CD8-positive, alpha-beta T cell (primary cell): ENCODE measurements at regions of chr5 and their contacts with region 1.

Region 1: DNA sequence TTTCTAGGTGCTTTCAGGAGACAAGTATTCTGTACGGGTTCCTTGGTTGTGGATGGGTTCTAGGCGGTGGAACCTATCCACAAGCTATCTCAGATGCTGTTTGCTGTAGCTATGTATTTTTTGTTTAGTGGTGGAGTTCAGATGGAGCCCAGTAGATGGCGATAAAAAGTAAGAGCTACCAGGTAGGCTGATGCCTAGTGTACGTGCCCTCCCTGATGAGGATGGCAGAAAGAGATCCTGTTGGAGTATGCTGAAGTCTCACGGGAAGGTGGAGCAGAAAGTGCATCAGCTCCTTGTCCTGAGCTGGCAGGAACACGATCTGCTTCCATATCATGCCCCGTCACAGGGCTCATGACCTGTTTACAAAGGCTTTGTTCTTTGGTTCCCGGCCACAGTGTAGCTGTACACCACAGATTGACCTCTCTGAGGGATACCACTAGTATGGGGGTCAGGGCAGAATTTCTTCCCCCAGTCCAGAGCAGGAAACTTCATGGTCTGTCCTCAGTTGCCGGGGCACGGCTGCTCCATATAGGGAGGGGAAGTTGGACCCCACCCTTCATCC is 12.6 kb upstream of the UGT3A2 start:
- DNase-seq: peak in 2 of 9 experiments; percentile 43 to 54
- ATAC-seq: peak; percentile 57
- H3K4me3 ChIP-seq: no peak overlapping the region
- H3K4me3 Mint-ChIP-seq: no peak overlapping the region
- H3K27ac ChIP-seq: no peak overlapping the region
- H3K27ac Mint-ChIP-seq: no peak overlapping the region
- H3K4me1 ChIP-seq: no peaks in the 10 kb centered on the region
- H3K4me1 Mint-ChIP-seq: no peaks in the 10 kb centered on the region
- H3K27me3 ChIP-seq: no peaks in the 10 kb centered on the region
- H3K27me3 Mint-ChIP-seq: peaks cover 30% of the 10 kb centered on the region
- CTCF ChIP-seq: peak; percentile 71

Region 2: DNA sequence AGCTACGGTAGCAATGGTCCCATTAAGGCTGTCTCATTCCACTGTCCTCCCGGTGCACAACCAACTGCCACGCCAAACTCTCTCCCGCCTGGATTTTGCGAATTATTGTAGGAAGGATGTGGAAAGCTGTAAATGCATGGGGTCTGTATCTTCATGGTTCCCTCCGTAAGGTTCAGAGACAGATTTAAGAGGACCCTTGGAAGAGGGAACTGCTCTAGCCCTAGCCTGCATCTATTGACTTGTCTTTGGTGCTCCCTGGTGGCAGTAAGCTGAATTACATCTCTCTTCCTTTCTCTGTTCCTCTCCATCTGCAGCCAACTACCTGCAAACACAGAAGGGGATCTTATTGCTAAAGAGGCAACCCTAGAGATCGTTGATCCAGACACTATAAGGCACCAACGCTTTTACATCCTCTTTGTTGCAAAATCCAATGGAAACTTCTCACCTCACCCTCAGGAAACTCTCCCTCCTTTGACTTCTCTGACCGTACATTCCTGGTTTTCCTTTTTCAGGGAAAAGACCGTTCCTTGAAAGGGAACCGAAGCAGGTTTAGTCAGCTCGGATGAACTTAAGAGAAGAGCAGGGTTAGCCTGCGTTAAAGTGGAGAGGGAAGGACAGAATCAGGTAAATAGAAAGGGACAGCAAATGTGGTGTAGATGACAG is 152.8 kb before region 1 on chr5:
- CTCF ChIA-PET with region 1: no interaction called
- POLR2A ChIA-PET with region 1: no interaction called
- intact Hi-C with region 1: no loop called
- DNase-seq: peak; percentile 35 to 79 (median 66)
- ATAC-seq: peak; percentile 56
- H3K4me3 ChIP-seq: no peak overlapping the region
- H3K4me3 Mint-ChIP-seq: peak overlapping the region; percentile 33
- H3K27ac ChIP-seq: no peak overlapping the region
- H3K27ac Mint-ChIP-seq: no peak overlapping the region
- H3K4me1 ChIP-seq: peaks cover 14% of the 10 kb centered on the region
- H3K4me1 Mint-ChIP-seq: peaks cover 36% of the 10 kb centered on the region
- H3K27me3 ChIP-seq: no peaks in the 10 kb centered on the region
- H3K27me3 Mint-ChIP-seq: peaks cover 4% of the 10 kb centered on the region
- CTCF ChIP-seq: peak; percentile 84

Region 3: GRCh38 chr5:36089989-36090564 is 10.8 kb after region 1 on chr5:
- CTCF ChIA-PET with region 1: interaction called, 13 read pairs
- POLR2A ChIA-PET with region 1: no interaction called
- intact Hi-C with region 1: no loop called
- DNase-seq: peak in 1 of 9 experiments; percentile 12
- ATAC-seq: no peak
- H3K4me3 ChIP-seq: no peak overlapping the region
- H3K4me3 Mint-ChIP-seq: no peak overlapping the region
- H3K27ac ChIP-seq: no peak overlapping the region
- H3K27ac Mint-ChIP-seq: no peak overlapping the region
- H3K4me1 ChIP-seq: no peaks in the 10 kb centered on the region
- H3K4me1 Mint-ChIP-seq: no peaks in the 10 kb centered on the region
- H3K27me3 ChIP-seq: no peaks in the 10 kb centered on the region
- H3K27me3 Mint-ChIP-seq: peaks cover 14% of the 10 kb centered on the region
- CTCF ChIP-seq: no peak

Region 4: DNA sequence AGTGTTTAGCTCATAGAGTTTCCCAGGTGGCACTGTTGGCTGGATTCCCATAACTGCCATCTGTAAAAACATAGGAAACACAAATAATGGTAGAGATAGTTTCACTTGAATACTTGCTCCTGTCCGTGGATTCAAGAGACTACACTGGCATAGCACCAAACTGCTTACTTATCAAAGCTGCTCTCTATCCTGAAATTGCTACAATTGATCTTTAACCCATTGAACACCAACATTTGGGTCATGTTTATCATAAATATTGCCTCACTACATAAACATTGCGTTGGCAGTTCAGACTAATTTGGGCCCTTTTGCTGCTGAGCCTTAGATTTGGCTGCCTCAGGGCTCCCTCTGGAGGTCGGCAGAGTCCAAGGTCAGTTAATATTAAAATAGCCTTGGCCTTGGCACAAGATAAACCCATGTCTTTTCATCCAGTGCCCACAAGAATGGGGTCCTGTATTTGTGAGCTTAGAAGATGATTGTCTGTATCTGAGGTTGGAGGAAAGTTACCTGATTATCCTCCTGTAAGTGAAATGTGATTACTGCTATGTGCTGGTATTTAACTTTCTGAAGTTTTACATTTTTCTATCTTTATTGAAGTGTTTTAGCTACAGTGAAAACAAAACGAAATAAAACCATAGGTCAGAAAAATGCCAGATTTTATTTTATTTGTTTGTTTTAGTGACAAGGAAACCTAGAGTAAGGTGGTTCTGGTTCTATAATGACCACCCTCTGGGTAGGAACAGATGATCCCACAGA is 226.5 kb after region 1 on chr5:
- CTCF ChIA-PET with region 1: interaction called, 6 read pairs
- POLR2A ChIA-PET with region 1: no interaction called
- intact Hi-C with region 1: loop called (anchors 10 kb)
- DNase-seq: peak in 3 of 9 experiments; percentile 5 to 31 (median 20)
- ATAC-seq: no peak
- H3K4me3 ChIP-seq: no peak overlapping the region
- H3K4me3 Mint-ChIP-seq: no peak overlapping the region
- H3K27ac ChIP-seq: no peak overlapping the region
- H3K27ac Mint-ChIP-seq: no peak overlapping the region
- H3K4me1 ChIP-seq: no peaks in the 10 kb centered on the region
- H3K4me1 Mint-ChIP-seq: peaks cover 5% of the 10 kb centered on the region
- H3K27me3 ChIP-seq: peaks cover 0 to 2% of the 10 kb centered on the region in 2 experiments
- H3K27me3 Mint-ChIP-seq: no peaks in the 10 kb centered on the region
- CTCF ChIP-seq: no peak

Region 5: DNA sequence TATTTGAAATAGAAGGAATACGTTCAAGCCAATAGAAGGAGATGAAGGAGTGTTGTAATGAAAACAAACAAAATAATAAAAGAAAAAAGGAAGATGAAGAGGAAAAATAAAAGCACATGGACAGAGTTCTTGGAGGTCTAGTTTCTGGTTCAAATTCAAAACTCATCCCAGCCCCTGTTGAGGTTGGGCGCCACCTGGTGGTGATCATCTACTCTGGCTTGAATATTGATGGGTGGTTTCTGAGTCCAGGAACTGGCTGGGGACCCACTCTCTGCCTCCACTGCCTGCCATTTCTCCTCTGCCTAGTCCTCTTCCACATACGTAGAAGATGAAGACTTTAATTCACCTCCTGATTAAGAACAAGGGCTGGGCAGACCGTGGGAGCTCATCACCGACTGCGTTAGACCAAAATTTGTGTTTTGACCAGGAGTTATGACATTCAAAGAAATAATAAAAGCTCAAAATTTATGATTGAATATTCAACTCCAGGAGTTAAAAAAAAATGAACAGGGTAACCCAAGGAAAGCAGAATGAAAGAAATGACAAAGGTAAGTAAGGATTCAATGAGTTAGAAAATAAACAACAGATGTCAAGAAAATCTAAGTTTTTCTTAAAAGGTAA is 428.2 kb after region 1 on chr5:
- CTCF ChIA-PET with region 1: interaction called, 24 read pairs
- POLR2A ChIA-PET with region 1: no interaction called
- intact Hi-C with region 1: loop called in 1 of 2 experiments (anchors 1 kb)
- DNase-seq: peak; percentile 18 to 79 (median 67)
- ATAC-seq: peak; percentile 26
- H3K4me3 ChIP-seq: no peak overlapping the region
- H3K4me3 Mint-ChIP-seq: no peak overlapping the region
- H3K27ac ChIP-seq: no peak overlapping the region
- H3K27ac Mint-ChIP-seq: no peak overlapping the region
- H3K4me1 ChIP-seq: no peaks in the 10 kb centered on the region
- H3K4me1 Mint-ChIP-seq: no peaks in the 10 kb centered on the region
- H3K27me3 ChIP-seq: no peaks in the 10 kb centered on the region
- H3K27me3 Mint-ChIP-seq: peaks cover 2% of the 10 kb centered on the region
- CTCF ChIP-seq: peak; percentile 90

Region 6: GRCh38 chr5:36690041-36690961 is 611.0 kb after region 1 on chr5:
- CTCF ChIA-PET with region 1: interaction called, 3 read pairs
- POLR2A ChIA-PET with region 1: no interaction called
- intact Hi-C with region 1: loop called (anchors 5 to 10 kb)
- DNase-seq: peak; percentile 21 to 73 (median 61)
- ATAC-seq: peak; percentile 91
- H3K4me3 ChIP-seq: peak overlapping the region; percentile 51 to 68
- H3K4me3 Mint-ChIP-seq: peak overlapping the region; percentile 90
- H3K27ac ChIP-seq: peak overlapping the region in 1 of 2 experiments; percentile 19
- H3K27ac Mint-ChIP-seq: no peak overlapping the region
- H3K4me1 ChIP-seq: peaks cover 11% of the 10 kb centered on the region
- H3K4me1 Mint-ChIP-seq: peaks cover 17% of the 10 kb centered on the region
- H3K27me3 ChIP-seq: no peaks in the 10 kb centered on the region
- H3K27me3 Mint-ChIP-seq: peaks cover 28% of the 10 kb centered on the region
- CTCF ChIP-seq: peak; percentile 75

Region 7: GRCh38 chr5:36695677-36696673 is 616.7 kb after region 1 on chr5:
- CTCF ChIA-PET with region 1: interaction called, 3 read pairs
- POLR2A ChIA-PET with region 1: no interaction called
- intact Hi-C with region 1: loop called (anchors 5 to 10 kb)
- DNase-seq: peak in 7 of 9 experiments; percentile 3 to 53 (median 32)
- ATAC-seq: peak; percentile 58
- H3K4me3 ChIP-seq: no peak overlapping the region
- H3K4me3 Mint-ChIP-seq: no peak overlapping the region
- H3K27ac ChIP-seq: no peak overlapping the region
- H3K27ac Mint-ChIP-seq: no peak overlapping the region
- H3K4me1 ChIP-seq: no peaks in the 10 kb centered on the region
- H3K4me1 Mint-ChIP-seq: peaks cover 7% of the 10 kb centered on the region
- H3K27me3 ChIP-seq: no peaks in the 10 kb centered on the region
- H3K27me3 Mint-ChIP-seq: peaks cover 18% of the 10 kb centered on the region
- CTCF ChIP-seq: peak; percentile 45